Activated CD4-positive, alpha-beta T cell treated with anti-CD3 and anti-CD28 coated beads for 36 hours (primary cell): ENCODE measurements at regions of chrX and their contacts with region 1.

Region 1: GRCh38 chrX:104922206-104922621 is 298.3 kb downstream of the TEX13A start:
- DNase-seq: peak; percentile 74
- ATAC-seq: peak; percentile 86
- H3K4me3 Mint-ChIP-seq: no peak overlapping the region
- H3K27ac Mint-ChIP-seq: no peak overlapping the region
- H3K4me1 Mint-ChIP-seq: no peaks in the 10 kb centered on the region
- H3K27me3 Mint-ChIP-seq: no peaks in the 10 kb centered on the region

Region 2: GRCh38 chrX:104482757-104483156 is 439.5 kb before region 1 on chrX:
- CTCF ChIA-PET with region 1: no interaction called
- POLR2A ChIA-PET with region 1: no interaction called
- intact Hi-C with region 1: loop called in 1 of 2 experiments (anchors 10 kb)
- DNase-seq: no peak
- ATAC-seq: no peak
- H3K4me3 Mint-ChIP-seq: no peak overlapping the region
- H3K27ac Mint-ChIP-seq: no peak overlapping the region
- H3K4me1 Mint-ChIP-seq: no peaks in the 10 kb centered on the region
- H3K27me3 Mint-ChIP-seq: no peaks in the 10 kb centered on the region

Region 3: GRCh38 chrX:104565791-104566680 is 356.2 kb before region 1 on chrX and contains the start of gene IL1RAPL2:
- CTCF ChIA-PET with region 1: no interaction called
- POLR2A ChIA-PET with region 1: no interaction called
- intact Hi-C with region 1: loop called (anchors 1 to 10 kb)
- DNase-seq: peak; percentile 56
- ATAC-seq: no peak
- H3K4me3 Mint-ChIP-seq: no peak within 1 kb of the TSS
- H3K27ac Mint-ChIP-seq: no peak within 1 kb of the TSS
- H3K4me1 Mint-ChIP-seq: no peaks in the 10 kb centered on the region
- H3K27me3 Mint-ChIP-seq: peaks cover 15% of the 10 kb centered on the region
- total RNA-seq, gene IL1RAPL2: not detected

Region 4: GRCh38 chrX:104668550-104668949 is 253.7 kb before region 1 on chrX:
- CTCF ChIA-PET with region 1: no interaction called
- POLR2A ChIA-PET with region 1: no interaction called
- intact Hi-C with region 1: loop called (anchors 2 to 5 kb)
- DNase-seq: no peak
- ATAC-seq: no peak
- H3K4me3 Mint-ChIP-seq: no peak overlapping the region
- H3K27ac Mint-ChIP-seq: no peak overlapping the region
- H3K4me1 Mint-ChIP-seq: no peaks in the 10 kb centered on the region
- H3K27me3 Mint-ChIP-seq: no peaks in the 10 kb centered on the region

Region 5: DNA sequence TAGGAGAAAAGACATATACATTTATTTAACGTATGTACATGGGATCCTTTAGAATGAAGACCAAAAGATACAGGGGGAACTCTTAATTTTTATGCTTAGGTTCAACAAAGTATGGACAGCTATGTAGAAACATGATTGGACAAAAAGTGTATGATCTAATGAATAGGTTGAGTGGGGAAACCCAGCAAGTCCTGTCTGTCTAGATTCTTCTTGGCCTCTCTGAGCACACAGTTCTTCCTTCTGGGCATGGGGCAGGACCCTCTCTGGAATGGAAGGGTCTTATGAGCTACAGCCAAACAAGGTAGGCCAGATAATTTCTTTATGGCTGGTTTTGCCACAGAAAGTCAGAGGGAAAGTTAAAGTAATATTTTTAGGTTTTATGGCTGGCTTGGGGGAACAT is 105.3 kb before region 1 on chrX:
- CTCF ChIA-PET with region 1: no interaction called
- POLR2A ChIA-PET with region 1: no interaction called
- intact Hi-C with region 1: no loop called
- DNase-seq: no peak
- ATAC-seq: no peak
- H3K4me3 Mint-ChIP-seq: no peak overlapping the region
- H3K27ac Mint-ChIP-seq: no peak overlapping the region
- H3K4me1 Mint-ChIP-seq: no peaks in the 10 kb centered on the region
- H3K27me3 Mint-ChIP-seq: no peaks in the 10 kb centered on the region

Region 6: GRCh38 chrX:105282077-105282476 is 359.9 kb after region 1 on chrX:
- CTCF ChIA-PET with region 1: no interaction called
- POLR2A ChIA-PET with region 1: no interaction called
- intact Hi-C with region 1: no loop called
- DNase-seq: no peak
- ATAC-seq: no peak
- H3K4me3 Mint-ChIP-seq: no peak overlapping the region
- H3K27ac Mint-ChIP-seq: no peak overlapping the region
- H3K4me1 Mint-ChIP-seq: no peaks in the 10 kb centered on the region
- H3K27me3 Mint-ChIP-seq: no peaks in the 10 kb centered on the region